Esophagus squamous epithelium (tissue), 5 donors: ENCODE measurements at regions of chr12 and their contacts with region 1.

Region 1: GRCh38 chr12:106955377-106956047 is at the start of gene TMEM263:
- DNase-seq: peak; percentile 28
- H3K4me3 ChIP-seq: peak within 1 kb of the TSS; percentile 75 to 89 (median 81)
- H3K27ac ChIP-seq: peak within 1 kb of the TSS; percentile 89 to 95 (median 92)
- H3K4me1 ChIP-seq: peaks cover 4 to 52% (median 24%) of the 10 kb centered on the region in 3 donors
- H3K27me3 ChIP-seq: no peaks in the 10 kb centered on the region
- CTCF ChIP-seq: no peak
- POLR2A ChIP-seq: peak in 3 of 4 donors; percentile 49 to 94 (median 93)
- total RNA-seq, gene TMEM263: 5.1 to 12.0 (median 8.6) TPM

Region 2: GRCh38 chr12:107093417-107094182 is 138.1 kb after region 1 on chr12 and contains the start of gene CRY1:
- intact Hi-C with region 1: loop called (anchors 10 kb)
- DNase-seq: peak; percentile 59
- H3K4me3 ChIP-seq: peak within 1 kb of the TSS; percentile 81 to 93 (median 83)
- H3K27ac ChIP-seq: peak within 1 kb of the TSS; percentile 96 to 99 (median 97)
- H3K4me1 ChIP-seq: peaks cover 3 to 30% (median 8%) of the 10 kb centered on the region in 3 donors
- H3K27me3 ChIP-seq: no peaks in the 10 kb centered on the region
- CTCF ChIP-seq: peak in 2 of 6 experiments; percentile 8 to 20
- POLR2A ChIP-seq: peak in 3 of 4 donors; percentile 81 to 96 (median 87)
- total RNA-seq, gene CRY1: 5.7 to 14.3 (median 10.8) TPM